Activated CD4-positive, alpha-beta T cell treated with anti-CD3 and anti-CD28 coated beads, Interleukin-2, amount 10 ng/mL, durations not matched to agents 24 days and 14 days (primary cell): ENCODE measurements at regions of chr2 and their contacts with region 1.

Region 1: DNA sequence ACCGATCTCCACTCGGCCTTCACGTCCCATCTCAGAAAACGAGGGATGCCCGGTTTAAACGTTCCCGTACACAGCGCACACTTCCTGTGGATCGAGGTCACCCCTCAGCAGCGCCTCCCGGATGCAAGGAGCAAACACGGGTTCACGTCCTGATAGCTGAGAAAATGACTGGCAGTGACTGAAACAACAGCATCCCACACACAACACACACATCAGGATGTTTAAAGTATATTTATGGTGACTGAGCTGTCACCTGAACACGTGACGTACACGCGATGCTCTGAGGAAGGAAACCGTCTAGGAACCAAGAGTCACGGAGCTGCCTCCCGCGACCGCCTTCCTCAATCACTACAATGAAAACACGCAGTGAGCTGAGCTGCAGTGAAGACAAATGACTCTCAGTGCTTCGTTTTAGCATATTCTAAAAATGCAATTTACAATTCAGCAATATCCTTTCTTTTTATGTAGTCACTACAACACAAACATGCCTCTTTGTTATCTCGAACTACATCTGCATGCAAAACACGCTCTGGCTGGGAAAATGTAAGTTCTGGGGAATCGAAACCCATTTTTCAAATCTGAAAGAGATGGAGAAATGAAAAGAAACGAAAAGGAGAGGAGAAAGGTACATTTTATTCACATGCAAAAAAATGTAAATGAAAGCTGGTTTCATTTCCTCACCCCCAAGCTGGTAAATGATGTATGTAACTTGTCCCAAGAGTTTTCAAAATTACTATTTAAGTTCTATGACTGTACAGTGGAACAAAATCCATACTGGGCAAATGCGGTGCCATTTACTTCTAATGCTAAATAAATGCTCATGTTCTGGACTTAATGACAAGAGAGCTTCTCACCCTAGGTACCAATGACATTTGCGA is 19.8 kb downstream of the HDAC4 start:
- DNase-seq: peak; percentile 90
- H3K4me3 Mint-ChIP-seq: peak overlapping the region; percentile 81
- H3K27ac Mint-ChIP-seq: peak overlapping the region; percentile 90
- H3K4me1 Mint-ChIP-seq: peaks cover 41% of the 10 kb centered on the region
- H3K27me3 Mint-ChIP-seq: no peaks in the 10 kb centered on the region

Region 2: GRCh38 chr2:239216614-239217273 is 164.3 kb before region 1 on chr2:
- intact Hi-C with region 1: loop called (anchors 2 kb)
- DNase-seq: peak; percentile 78
- H3K4me3 Mint-ChIP-seq: peak overlapping the region; percentile 77
- H3K27ac Mint-ChIP-seq: peak overlapping the region; percentile 91
- H3K4me1 Mint-ChIP-seq: peaks cover 43% of the 10 kb centered on the region
- H3K27me3 Mint-ChIP-seq: no peaks in the 10 kb centered on the region

Region 3: DNA sequence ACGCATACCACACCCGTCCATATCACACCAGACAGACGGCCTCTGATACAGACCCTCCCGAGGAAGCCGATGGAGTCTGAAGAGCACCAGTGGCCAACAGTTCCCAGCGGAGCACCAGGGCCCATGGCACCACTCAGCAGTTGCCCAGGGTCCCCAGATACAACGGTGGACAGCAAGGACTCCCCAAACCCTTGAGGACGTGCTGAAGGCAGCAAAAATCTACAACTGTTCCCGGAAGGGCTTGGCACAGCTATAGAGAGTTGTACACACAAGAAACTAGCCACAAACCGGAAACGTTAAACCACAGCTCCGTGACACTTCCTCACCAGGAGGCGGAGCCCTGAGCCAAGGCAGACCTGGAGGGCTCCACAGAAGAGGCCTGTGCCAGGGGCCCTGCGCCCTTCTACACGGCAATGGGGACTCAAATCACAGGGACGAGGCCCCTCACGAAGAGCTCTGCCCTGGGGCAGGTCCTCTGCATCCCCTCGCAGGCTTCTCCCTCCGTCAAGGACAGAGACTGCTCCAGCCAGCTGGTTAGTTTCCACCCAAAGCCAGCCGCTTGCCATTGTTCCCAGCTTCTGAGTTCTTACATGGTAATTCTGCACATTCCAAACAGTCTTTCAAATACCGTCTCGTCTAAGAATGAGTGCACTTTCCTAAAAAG is 113.7 kb before region 1 on chr2:
- intact Hi-C with region 1: loop called (anchors 1 kb)
- DNase-seq: peak; percentile 98
- H3K4me3 Mint-ChIP-seq: peak overlapping the region; percentile 93
- H3K27ac Mint-ChIP-seq: peak overlapping the region; percentile 84
- H3K4me1 Mint-ChIP-seq: peaks cover 76% of the 10 kb centered on the region
- H3K27me3 Mint-ChIP-seq: peaks cover 12% of the 10 kb centered on the region

Region 4: DNA sequence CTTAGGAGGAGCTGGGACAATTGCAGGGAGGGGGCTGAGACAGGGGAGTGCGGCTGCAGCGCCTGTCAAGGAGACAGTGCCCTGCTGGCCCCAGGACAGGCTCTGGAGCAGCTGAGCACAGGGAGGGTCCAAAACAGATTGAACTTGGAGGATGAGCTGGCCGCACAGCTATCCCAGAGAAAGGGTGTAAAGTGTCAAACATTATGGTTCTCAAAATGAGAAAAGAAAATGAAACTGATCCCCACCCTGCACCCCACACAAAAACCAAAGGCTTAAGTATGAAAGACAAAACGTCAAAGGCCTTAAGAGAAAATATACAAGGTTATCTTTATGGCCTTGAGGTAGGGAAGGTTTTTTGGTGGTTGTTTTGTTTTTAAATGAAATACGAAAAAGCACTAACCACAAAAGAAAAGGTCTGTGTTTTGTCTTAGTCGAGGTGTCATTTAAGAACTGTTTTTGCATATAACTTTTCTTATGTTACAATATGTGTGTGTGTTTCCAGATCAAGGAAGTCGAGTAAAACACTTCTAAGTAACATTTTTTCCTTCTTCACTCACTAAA is 92.0 kb before region 1 on chr2:
- intact Hi-C with region 1: loop called (anchors 1 kb)
- DNase-seq: peak; percentile 88
- H3K4me3 Mint-ChIP-seq: peak overlapping the region; percentile 88
- H3K27ac Mint-ChIP-seq: peak overlapping the region; percentile 97
- H3K4me1 Mint-ChIP-seq: peaks cover 70% of the 10 kb centered on the region
- H3K27me3 Mint-ChIP-seq: peaks cover 10% of the 10 kb centered on the region

Region 5: DNA sequence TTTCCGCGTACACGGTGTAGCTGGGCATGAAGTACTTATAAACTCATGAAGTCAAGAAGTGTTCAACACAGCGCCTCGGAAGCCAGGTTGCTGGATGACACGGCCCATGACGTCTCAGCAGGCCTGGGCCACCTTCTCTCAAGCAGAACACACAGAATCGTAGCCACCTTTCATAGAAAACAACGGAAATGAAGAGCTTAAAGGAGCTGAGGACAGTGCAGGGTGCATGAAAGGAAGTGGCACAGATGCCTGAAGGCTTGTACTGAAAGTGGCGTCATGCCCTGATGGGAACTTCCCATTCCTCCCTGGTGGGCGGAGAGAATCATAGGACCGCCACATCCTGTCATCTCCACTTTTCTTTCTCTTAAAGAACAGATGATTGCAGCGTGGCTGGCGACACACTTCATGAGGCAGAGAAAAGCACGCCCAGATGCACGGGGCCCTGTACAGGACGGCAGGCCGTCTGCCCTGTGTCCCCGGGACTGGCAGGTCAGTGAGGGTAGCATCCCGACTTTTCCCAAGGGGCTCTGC is 11.4 kb before region 1 on chr2:
- intact Hi-C with region 1: loop called (anchors 1 kb)
- DNase-seq: peak; percentile 95
- H3K4me3 Mint-ChIP-seq: no peak overlapping the region
- H3K27ac Mint-ChIP-seq: no peak overlapping the region
- H3K4me1 Mint-ChIP-seq: peaks cover 11% of the 10 kb centered on the region
- H3K27me3 Mint-ChIP-seq: no peaks in the 10 kb centered on the region